ENCODE measurements at regions of chr3 and their contacts with region 1.

Region 1: GRCh38 chr3:55485211-55485791 is 1.8 kb downstream of the WNT5A start:
- DNase-seq: peak; percentile 83
- H3K4me3 ChIP-seq: peak overlapping the region; percentile 79
- H3K27ac ChIP-seq: peak overlapping the region; percentile 81
- H3K4me1 ChIP-seq: peaks cover 3% of the 10 kb centered on the region
- H3K27me3 ChIP-seq: no peaks in the 10 kb centered on the region
- CTCF ChIP-seq: peak; percentile 44; the same call in 1 of the 2 replicates

Region 2: GRCh38 chr3:55549177-55549576 is 63.9 kb after region 1 on chr3:
- CTCF ChIA-PET with region 1: no interaction called
- POLR2A ChIA-PET with region 1: no interaction called
- intact Hi-C with region 1: loop called (anchors 5 kb)
- DNase-seq: peak; percentile 43
- H3K4me3 ChIP-seq: no peak overlapping the region
- H3K27ac ChIP-seq: no peak overlapping the region
- H3K4me1 ChIP-seq: peaks cover 26% of the 10 kb centered on the region
- H3K27me3 ChIP-seq: no peaks in the 10 kb centered on the region
- CTCF ChIP-seq: 0 out of 2 replicates have a peak, but pooled peaks have one; percentile 26

Region 3: GRCh38 chr3:55885721-55886120 is 400.4 kb after region 1 on chr3:
- CTCF ChIA-PET with region 1: no interaction called
- POLR2A ChIA-PET with region 1: no interaction called
- intact Hi-C with region 1: loop called (anchors 5 kb)
- DNase-seq: peak; percentile 76
- H3K4me3 ChIP-seq: no peak overlapping the region
- H3K27ac ChIP-seq: no peak overlapping the region
- H3K4me1 ChIP-seq: peaks cover 31% of the 10 kb centered on the region
- H3K27me3 ChIP-seq: no peaks in the 10 kb centered on the region
- CTCF ChIP-seq: no peak

Region 4: DNA sequence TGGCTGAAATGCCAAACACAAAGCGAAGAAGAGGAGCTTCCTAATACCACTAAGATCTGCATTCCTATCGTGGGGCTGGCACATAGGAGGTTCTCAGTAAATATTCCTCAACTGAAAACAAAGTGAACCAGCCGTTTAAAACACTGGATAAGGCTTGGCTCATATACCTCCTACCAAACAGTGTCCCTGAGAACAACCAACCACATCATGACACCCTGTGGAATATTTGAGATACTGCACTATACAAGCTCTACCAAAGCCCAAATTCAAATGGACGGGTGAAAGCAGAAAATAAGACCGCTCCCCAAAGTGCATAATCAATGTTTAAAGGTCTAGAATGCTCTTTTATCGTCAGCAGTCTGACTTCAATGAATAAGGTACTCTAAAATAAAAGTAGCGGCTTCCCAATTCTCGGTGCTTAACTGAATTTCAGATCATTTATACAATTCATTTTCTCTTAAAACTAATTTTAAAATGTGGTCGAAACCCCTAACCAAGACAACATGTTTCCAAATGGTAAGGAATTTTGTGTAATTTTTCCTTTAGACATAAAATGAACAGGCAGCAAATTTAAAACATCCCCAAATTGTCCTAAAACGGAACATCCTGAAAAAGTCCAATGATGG is 557.1 kb after region 1 on chr3:
- CTCF ChIA-PET with region 1: no interaction called
- POLR2A ChIA-PET with region 1: no interaction called
- intact Hi-C with region 1: loop called (anchors 5 kb)
- DNase-seq: peak; percentile 63
- H3K4me3 ChIP-seq: no peak overlapping the region
- H3K27ac ChIP-seq: no peak overlapping the region
- H3K4me1 ChIP-seq: peaks cover 8% of the 10 kb centered on the region
- H3K27me3 ChIP-seq: no peaks in the 10 kb centered on the region
- CTCF ChIP-seq: peak; percentile 61

Region 5: GRCh38 chr3:56119575-56120349 is 634.5 kb after region 1 on chr3:
- CTCF ChIA-PET with region 1: interaction called, 19 read pairs
- POLR2A ChIA-PET with region 1: no interaction called
- intact Hi-C with region 1: no loop called
- DNase-seq: peak; percentile 21
- H3K4me3 ChIP-seq: no peak overlapping the region
- H3K27ac ChIP-seq: no peak overlapping the region
- H3K4me1 ChIP-seq: peaks cover 6% of the 10 kb centered on the region
- H3K27me3 ChIP-seq: no peaks in the 10 kb centered on the region
- CTCF ChIP-seq: no peak

Region 6: GRCh38 chr3:56251343-56251945 is 766.1 kb after region 1 on chr3:
- CTCF ChIA-PET with region 1: no interaction called
- POLR2A ChIA-PET with region 1: no interaction called
- intact Hi-C with region 1: loop called (anchors 5 kb)
- DNase-seq: peak; percentile 41
- H3K4me3 ChIP-seq: no peak overlapping the region
- H3K27ac ChIP-seq: no peak overlapping the region
- H3K4me1 ChIP-seq: no peaks in the 10 kb centered on the region
- H3K27me3 ChIP-seq: no peaks in the 10 kb centered on the region
- CTCF ChIP-seq: peak; percentile 64